Activated CD4-positive, alpha-beta memory T cell treated with anti-CD3 and anti-CD28 coated beads, Interleukin-2, amount 10 ng/mL, durations not matched to agents 7 days and 5 days (primary cell): ENCODE measurements at regions of chr2 and their contacts with region 1.

Region 1: DNA sequence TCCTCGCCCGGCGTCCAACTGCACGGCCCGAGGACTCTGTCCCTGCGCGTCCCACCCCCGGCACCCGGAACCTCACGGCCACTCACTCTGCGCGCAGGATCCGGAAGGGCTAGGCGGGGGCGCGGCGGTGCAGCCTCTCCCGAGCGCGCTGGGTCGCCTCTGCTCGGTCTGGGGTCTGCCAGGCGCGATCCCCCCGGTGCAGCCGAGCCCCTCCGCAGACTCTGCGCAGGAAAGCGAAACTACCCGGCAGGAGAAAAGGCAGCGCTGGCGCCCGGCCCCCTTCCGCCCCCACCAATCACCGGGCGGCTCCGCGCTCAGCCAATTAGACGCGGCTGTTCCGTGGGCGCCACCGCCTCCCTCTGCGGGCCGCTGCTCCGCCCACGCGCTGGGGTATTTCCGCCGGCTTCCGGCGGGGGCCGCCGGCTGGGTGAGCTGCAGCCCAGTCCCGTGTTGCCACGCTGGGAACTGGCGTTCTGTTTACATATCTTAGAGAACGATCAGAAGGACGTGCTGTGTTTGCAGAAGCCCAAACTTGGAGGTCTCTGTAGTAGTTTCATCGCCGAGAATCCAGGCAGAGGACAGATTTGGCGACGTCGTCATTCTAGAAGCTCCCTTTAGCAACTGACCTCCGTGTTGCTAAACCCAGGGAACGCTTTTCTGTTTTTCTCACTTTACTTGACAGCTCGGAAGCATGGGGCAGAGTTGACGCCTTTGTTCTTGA is at the start of gene STAT1:
- DNase-seq: peak; percentile 96
- H3K4me3 Mint-ChIP-seq: no peak within 1 kb of the TSS
- H3K27ac Mint-ChIP-seq: no peak within 1 kb of the TSS
- H3K4me1 Mint-ChIP-seq: peaks cover 44% of the 10 kb centered on the region
- H3K27me3 Mint-ChIP-seq: no peaks in the 10 kb centered on the region
- total RNA-seq, gene STAT1: 540 to 547 TPM

Region 2: GRCh38 chr2:190916829-190917228 is 97.3 kb before region 1 on chr2:
- CTCF ChIA-PET with region 1: no interaction called
- POLR2A ChIA-PET with region 1: no interaction called
- DNase-seq: no peak
- H3K4me3 Mint-ChIP-seq: no peak overlapping the region
- H3K27ac Mint-ChIP-seq: no peak overlapping the region
- H3K4me1 Mint-ChIP-seq: peaks cover 23% of the 10 kb centered on the region
- H3K27me3 Mint-ChIP-seq: no peaks in the 10 kb centered on the region

Region 3: GRCh38 chr2:190984595-190984994 is 29.5 kb before region 1 on chr2:
- CTCF ChIA-PET with region 1: interaction called, 3 read pairs
- POLR2A ChIA-PET with region 1: interaction called, 14 read pairs
- DNase-seq: peak; percentile 31
- H3K4me3 Mint-ChIP-seq: no peak overlapping the region
- H3K27ac Mint-ChIP-seq: peak overlapping the region; percentile 67
- H3K4me1 Mint-ChIP-seq: peaks cover 66% of the 10 kb centered on the region
- H3K27me3 Mint-ChIP-seq: no peaks in the 10 kb centered on the region

Region 4: GRCh38 chr2:191030521-191031154 is 16.5 kb after region 1 on chr2:
- CTCF ChIA-PET with region 1: interaction called, 14 read pairs
- POLR2A ChIA-PET with region 1: interaction called, 167 read pairs
- DNase-seq: peak; percentile 36
- H3K4me3 Mint-ChIP-seq: peak overlapping the region; percentile 7
- H3K27ac Mint-ChIP-seq: peak overlapping the region; percentile 69
- H3K4me1 Mint-ChIP-seq: peaks cover 59% of the 10 kb centered on the region
- H3K27me3 Mint-ChIP-seq: no peaks in the 10 kb centered on the region

Region 5: GRCh38 chr2:191051825-191052778 is 38.0 kb after region 1 on chr2:
- CTCF ChIA-PET with region 1: interaction called, 6 read pairs
- POLR2A ChIA-PET with region 1: interaction called, 20 read pairs
- DNase-seq: no peak
- H3K4me3 Mint-ChIP-seq: no peak overlapping the region
- H3K27ac Mint-ChIP-seq: no peak overlapping the region
- H3K4me1 Mint-ChIP-seq: peaks cover 28% of the 10 kb centered on the region
- H3K27me3 Mint-ChIP-seq: no peaks in the 10 kb centered on the region